A549 (cell line): ENCODE measurements at regions of chr18 and their contacts with region 1.

Region 1: GRCh38 chr18:3703732-3704176 is 253.8 kb downstream of the TGIF1 start:
- DNase-seq: peak; percentile 51 to 72
- ATAC-seq: peak; percentile 89 to 96
- H3K4me3 ChIP-seq: no peak overlapping the region
- H3K27ac ChIP-seq: peak overlapping the region; percentile 78 to 81
- H3K4me1 ChIP-seq: peaks cover 21% of the 10 kb centered on the region
- CTCF ChIP-seq: peak; percentile 73
- EP300 ChIP-seq: no peak
- POLR2A ChIP-seq: no peak
- RAD21 ChIP-seq: peak; percentile 74 to 76

Region 2: GRCh38 chr18:3692113-3692621 is 11.6 kb before region 1 on chr18:
- CTCF ChIA-PET with region 1: interaction called, 12 read pairs
- POLR2A ChIA-PET with region 1: interaction called, 3 read pairs
- DNase-seq: peak in 1 of 2 experiments; percentile 43
- ATAC-seq: no peak
- H3K4me3 ChIP-seq: no peak overlapping the region
- H3K27ac ChIP-seq: peak overlapping the region; percentile 50 to 68
- H3K4me1 ChIP-seq: peaks cover 43% of the 10 kb centered on the region
- CTCF ChIP-seq: no peak
- EP300 ChIP-seq: no peak
- POLR2A ChIP-seq: no peak
- RAD21 ChIP-seq: no peak

Region 3: GRCh38 chr18:3869848-3870247 is 166.1 kb after region 1 on chr18:
- CTCF ChIA-PET with region 1: interaction called, 16 read pairs
- POLR2A ChIA-PET with region 1: no interaction called
- DNase-seq: peak; percentile 19 to 77
- ATAC-seq: peak; percentile 71 to 82; a peak in 4 of 6 replicates
- H3K4me3 ChIP-seq: no peak overlapping the region
- H3K27ac ChIP-seq: peak overlapping the region; percentile 11 to 76; a peak in 3 of 6 replicates
- H3K4me1 ChIP-seq: peaks cover 11% of the 10 kb centered on the region; the same call in 2 of the 3 replicates
- CTCF ChIP-seq: peak; percentile 52
- EP300 ChIP-seq: no peak
- POLR2A ChIP-seq: no peak
- RAD21 ChIP-seq: peak; percentile 78 to 80

Region 4: GRCh38 chr18:3995476-3996102 is 291.8 kb after region 1 on chr18:
- CTCF ChIA-PET with region 1: interaction called, 21 read pairs
- POLR2A ChIA-PET with region 1: no interaction called
- DNase-seq: peak in 1 of 2 experiments; percentile 79
- ATAC-seq: peak; percentile 19 to 53; a peak in 3 of 6 replicates
- H3K4me3 ChIP-seq: no peak overlapping the region
- H3K27ac ChIP-seq: peak overlapping the region; percentile 49 to 83
- H3K4me1 ChIP-seq: peaks cover 19% of the 10 kb centered on the region
- CTCF ChIP-seq: peak; percentile 77
- EP300 ChIP-seq: no peak
- POLR2A ChIP-seq: no peak
- RAD21 ChIP-seq: peak; percentile 74 to 75